K562 (cell line): ENCODE measurements at regions of chr6 and their contacts with region 1.

Region 1: GRCh38 chr6:67640484-67640883 is 994.6 kb upstream of the ADGRB3 start:
- DNase-seq: no peak
- ATAC-seq: no peak
- H3K4me3 ChIP-seq: no peak overlapping the region
- H3K27ac ChIP-seq: no peak overlapping the region
- H3K4me1 ChIP-seq: no peaks in the 10 kb centered on the region
- H3K27me3 ChIP-seq: no peaks in the 10 kb centered on the region
- CTCF ChIP-seq: no peak
- EP300 ChIP-seq: no peak
- POLR2A ChIP-seq: no peak
- RAD21 ChIP-seq: no peak

Region 2: DNA sequence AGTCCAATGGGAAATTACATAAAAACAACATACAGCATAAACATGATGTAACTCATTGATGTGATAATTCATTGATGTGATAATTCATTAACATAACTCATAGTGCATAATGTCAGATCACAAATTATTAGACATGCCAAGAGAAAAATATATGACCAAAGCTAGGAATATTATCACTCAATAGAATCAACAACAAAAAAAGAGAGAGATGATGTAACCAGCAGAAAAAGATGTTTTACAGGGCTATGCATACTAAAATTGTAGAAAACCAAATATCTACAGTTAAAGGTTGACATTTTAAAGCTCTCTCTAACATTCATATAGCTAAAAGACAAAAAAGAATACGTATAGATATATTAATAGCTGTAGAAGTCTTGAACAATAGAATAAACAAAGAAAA is 72.6 kb before region 1 on chr6:
- CTCF ChIA-PET with region 1: no interaction called
- POLR2A ChIA-PET with region 1: no interaction called
- in situ Hi-C with region 1: no loop called
- intact Hi-C with region 1: loop called (anchors 10 kb)
- DNase-seq: no peak
- ATAC-seq: no peak
- H3K4me3 ChIP-seq: no peak overlapping the region
- H3K27ac ChIP-seq: no peak overlapping the region
- H3K4me1 ChIP-seq: no peaks in the 10 kb centered on the region
- H3K27me3 ChIP-seq: no peaks in the 10 kb centered on the region
- CTCF ChIP-seq: no peak
- EP300 ChIP-seq: no peak
- POLR2A ChIP-seq: no peak
- RAD21 ChIP-seq: no peak

Region 3: GRCh38 chr6:67615796-67616195 is 24.7 kb before region 1 on chr6:
- CTCF ChIA-PET with region 1: no interaction called
- POLR2A ChIA-PET with region 1: no interaction called
- in situ Hi-C with region 1: no loop called
- intact Hi-C with region 1: no loop called
- DNase-seq: no peak
- ATAC-seq: no peak
- H3K4me3 ChIP-seq: no peak overlapping the region
- H3K27ac ChIP-seq: no peak overlapping the region
- H3K4me1 ChIP-seq: no peaks in the 10 kb centered on the region
- H3K27me3 ChIP-seq: no peaks in the 10 kb centered on the region
- CTCF ChIP-seq: no peak
- EP300 ChIP-seq: no peak
- POLR2A ChIP-seq: no peak
- RAD21 ChIP-seq: no peak

Region 4: GRCh38 chr6:67653561-67653960 is 13.1 kb after region 1 on chr6:
- CTCF ChIA-PET with region 1: no interaction called
- POLR2A ChIA-PET with region 1: no interaction called
- in situ Hi-C with region 1: no loop called
- intact Hi-C with region 1: no loop called
- DNase-seq: no peak
- ATAC-seq: no peak
- H3K4me3 ChIP-seq: no peak overlapping the region
- H3K27ac ChIP-seq: no peak overlapping the region
- H3K4me1 ChIP-seq: no peaks in the 10 kb centered on the region
- H3K27me3 ChIP-seq: no peaks in the 10 kb centered on the region
- CTCF ChIP-seq: no peak
- EP300 ChIP-seq: no peak
- POLR2A ChIP-seq: no peak
- RAD21 ChIP-seq: no peak